ENCODE measurements at regions of chr10 and their contacts with region 1.

Region 1: GRCh38 chr10:3776796-3777571 is 8.0 kb downstream of the KLF6 start:
- DNase-seq: peak in 8 of 14 experiments; percentile 37 to 88 (median 62)
- ATAC-seq: peak; percentile 68
- H3K4me3 ChIP-seq: peak overlapping the region; percentile 14
- H3K4me3 Mint-ChIP-seq: peak overlapping the region; percentile 32
- H3K27ac ChIP-seq: peak overlapping the region; percentile 48 to 51
- H3K27ac Mint-ChIP-seq: peak overlapping the region; percentile 97
- H3K4me1 ChIP-seq: peaks cover 80% of the 10 kb centered on the region
- H3K4me1 Mint-ChIP-seq: peaks cover 70% of the 10 kb centered on the region
- H3K27me3 ChIP-seq: no peaks in the 10 kb centered on the region
- H3K27me3 Mint-ChIP-seq: no peaks in the 10 kb centered on the region
- CTCF ChIP-seq: no peak

Region 2: GRCh38 chr10:3668276-3668965 is 108.6 kb before region 1 on chr10:
- CTCF ChIA-PET with region 1: no interaction called
- POLR2A ChIA-PET with region 1: interaction called, 40 read pairs
- intact Hi-C with region 1: loop called (anchors 2 to 5 kb)
- DNase-seq: peak; percentile 49 to 89 (median 65)
- ATAC-seq: peak; percentile 90
- H3K4me3 ChIP-seq: peak overlapping the region; percentile 66
- H3K4me3 Mint-ChIP-seq: peak overlapping the region; percentile 89
- H3K27ac ChIP-seq: peak overlapping the region; percentile 65 to 88
- H3K27ac Mint-ChIP-seq: peak overlapping the region; percentile 93
- H3K4me1 ChIP-seq: peaks cover 49% of the 10 kb centered on the region
- H3K4me1 Mint-ChIP-seq: peaks cover 44% of the 10 kb centered on the region
- H3K27me3 ChIP-seq: no peaks in the 10 kb centered on the region
- H3K27me3 Mint-ChIP-seq: no peaks in the 10 kb centered on the region
- CTCF ChIP-seq: no peak

Region 3: GRCh38 chr10:3757638-3758490 is 19.1 kb before region 1 on chr10:
- CTCF ChIA-PET with region 1: interaction called, 6 read pairs
- POLR2A ChIA-PET with region 1: interaction called, 98 read pairs
- intact Hi-C with region 1: loop called in 1 of 2 experiments (anchors 2 kb)
- DNase-seq: peak; percentile 36 to 85 (median 60)
- ATAC-seq: peak; percentile 80
- H3K4me3 ChIP-seq: no peak overlapping the region
- H3K4me3 Mint-ChIP-seq: peak overlapping the region; percentile 71
- H3K27ac ChIP-seq: peak overlapping the region; percentile 60 to 78
- H3K27ac Mint-ChIP-seq: peak overlapping the region; percentile 90
- H3K4me1 ChIP-seq: peaks cover 71% of the 10 kb centered on the region
- H3K4me1 Mint-ChIP-seq: peaks cover 39% of the 10 kb centered on the region
- H3K27me3 ChIP-seq: no peaks in the 10 kb centered on the region
- H3K27me3 Mint-ChIP-seq: no peaks in the 10 kb centered on the region
- CTCF ChIP-seq: no peak

Region 4: DNA sequence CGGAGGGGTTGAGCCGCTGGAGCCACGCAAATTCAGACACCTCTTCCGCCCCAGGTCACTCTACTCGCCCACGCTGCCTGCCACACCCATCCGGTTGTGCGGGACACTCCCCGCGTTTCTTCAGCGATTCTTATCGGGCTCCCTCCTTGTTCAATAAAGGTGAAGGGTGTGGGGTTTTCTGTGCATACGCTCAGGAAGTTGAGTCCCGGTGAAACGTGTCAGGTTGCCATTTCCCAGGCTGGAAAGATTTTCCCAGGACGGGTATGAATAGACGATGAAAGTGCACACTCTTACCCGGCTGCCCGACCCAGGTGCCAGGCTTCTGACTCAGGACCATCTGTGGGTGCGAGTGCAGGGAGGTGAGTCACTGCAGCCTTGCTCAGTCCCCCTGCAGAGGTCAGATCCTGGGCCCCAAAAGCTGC is 13.9 kb before region 1 on chr10:
- CTCF ChIA-PET with region 1: interaction called, 6 read pairs
- POLR2A ChIA-PET with region 1: interaction called, 98 read pairs
- intact Hi-C with region 1: no loop called
- DNase-seq: peak in 2 of 14 experiments; percentile 37 to 48
- ATAC-seq: no peak
- H3K4me3 ChIP-seq: no peak overlapping the region
- H3K4me3 Mint-ChIP-seq: peak overlapping the region; percentile 20
- H3K27ac ChIP-seq: no peak overlapping the region
- H3K27ac Mint-ChIP-seq: peak overlapping the region; percentile 69
- H3K4me1 ChIP-seq: peaks cover 83% of the 10 kb centered on the region
- H3K4me1 Mint-ChIP-seq: peaks cover 70% of the 10 kb centered on the region
- H3K27me3 ChIP-seq: no peaks in the 10 kb centered on the region
- H3K27me3 Mint-ChIP-seq: no peaks in the 10 kb centered on the region
- CTCF ChIP-seq: no peak

Region 5: GRCh38 chr10:3805791-3806461 is 28.9 kb after region 1 on chr10:
- CTCF ChIA-PET with region 1: interaction called, 5 read pairs
- POLR2A ChIA-PET with region 1: interaction called, 497 read pairs
- intact Hi-C with region 1: no loop called
- DNase-seq: peak in 11 of 14 experiments; percentile 38 to 85 (median 57)
- ATAC-seq: peak; percentile 2
- H3K4me3 ChIP-seq: peak overlapping the region; percentile 1
- H3K4me3 Mint-ChIP-seq: peak overlapping the region; percentile 66
- H3K27ac ChIP-seq: peak overlapping the region; percentile 97 to 98
- H3K27ac Mint-ChIP-seq: no peak overlapping the region
- H3K4me1 ChIP-seq: peaks cover 90% of the 10 kb centered on the region
- H3K4me1 Mint-ChIP-seq: peaks cover 14% of the 10 kb centered on the region
- H3K27me3 ChIP-seq: no peaks in the 10 kb centered on the region
- H3K27me3 Mint-ChIP-seq: no peaks in the 10 kb centered on the region
- CTCF ChIP-seq: no peak

Region 6: DNA sequence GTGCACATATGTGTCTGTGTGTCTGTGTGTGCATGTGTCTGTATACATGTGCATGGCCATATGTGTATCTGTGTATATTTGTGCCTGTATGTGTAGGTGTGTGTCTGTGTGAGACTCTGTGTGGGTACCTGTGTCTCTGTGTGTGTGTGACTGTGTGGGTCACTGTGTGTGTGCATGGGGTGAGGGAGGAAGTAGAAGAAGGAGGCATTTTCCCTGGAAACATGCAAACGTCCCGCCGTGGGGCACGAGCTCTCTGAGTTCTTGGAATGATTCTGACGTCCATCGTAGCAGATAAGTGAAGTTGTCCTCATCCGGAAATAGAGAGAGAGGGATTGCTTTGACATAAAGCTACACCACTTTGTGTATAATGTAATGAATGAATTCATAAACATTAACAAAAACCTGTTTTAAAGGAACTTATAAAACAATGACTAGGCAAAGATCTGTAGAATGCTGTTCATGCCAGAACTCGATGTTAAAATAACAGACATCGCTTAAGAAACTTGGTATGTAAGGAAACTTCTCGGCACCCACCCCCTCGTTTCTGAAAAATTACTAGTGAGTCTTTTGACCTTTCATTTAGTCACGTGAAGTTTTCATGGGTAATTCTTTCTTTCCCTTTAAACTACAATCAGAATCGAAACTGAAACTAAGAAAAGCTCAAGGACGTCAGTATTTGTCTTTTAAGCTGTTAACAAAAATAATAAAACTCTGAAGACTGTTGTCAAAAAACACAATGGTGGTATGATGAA is 51.6 kb after region 1 on chr10:
- CTCF ChIA-PET with region 1: no interaction called
- POLR2A ChIA-PET with region 1: interaction called, 148 read pairs
- intact Hi-C with region 1: loop called in 1 of 2 experiments (anchors 5 kb)
- DNase-seq: peak in 5 of 14 experiments; percentile 37 to 85 (median 72)
- ATAC-seq: peak; percentile 64
- H3K4me3 ChIP-seq: peak overlapping the region; percentile 53
- H3K4me3 Mint-ChIP-seq: peak overlapping the region; percentile 88
- H3K27ac ChIP-seq: peak overlapping the region; percentile 61 to 65
- H3K27ac Mint-ChIP-seq: peak overlapping the region; percentile 85
- H3K4me1 ChIP-seq: peaks cover 17% of the 10 kb centered on the region
- H3K4me1 Mint-ChIP-seq: peaks cover 21% of the 10 kb centered on the region
- H3K27me3 ChIP-seq: no peaks in the 10 kb centered on the region
- H3K27me3 Mint-ChIP-seq: no peaks in the 10 kb centered on the region
- CTCF ChIP-seq: no peak

Measured in CD4-positive, alpha-beta T cell (primary cell).